ENCODE measurements at regions of chr4 and their contacts with region 1.

Region 1: GRCh38 chr4:185134307-185134869 is 8.7 kb upstream of the SLC25A4 start:
- DNase-seq: peak in 1 of 2 donors; percentile 71
- ATAC-seq: peak; percentile 69 to 75 (median 70)
- H3K4me3 ChIP-seq: no peak overlapping the region
- H3K4me3 Mint-ChIP-seq: no peak overlapping the region
- H3K27ac ChIP-seq: no peak overlapping the region
- H3K27ac Mint-ChIP-seq: no peak overlapping the region
- H3K4me1 ChIP-seq: no peaks in the 10 kb centered on the region
- H3K4me1 Mint-ChIP-seq: peaks cover 0 to 3% of the 10 kb centered on the region in 2 donors
- H3K27me3 ChIP-seq: peaks cover 4% of the 10 kb centered on the region
- H3K27me3 Mint-ChIP-seq: peaks cover 19 to 44% of the 10 kb centered on the region in 2 donors
- CTCF ChIP-seq: peak; percentile 91

Region 2: GRCh38 chr4:184745831-184746795 is 388.3 kb before region 1 on chr4:
- intact Hi-C with region 1: loop called (anchors 10 kb)
- DNase-seq: peak; percentile 26 to 85
- ATAC-seq: peak; percentile 77 to 90 (median 79)
- H3K4me3 ChIP-seq: no peak overlapping the region
- H3K4me3 Mint-ChIP-seq: no peak overlapping the region
- H3K27ac ChIP-seq: no peak overlapping the region
- H3K27ac Mint-ChIP-seq: no peak overlapping the region
- H3K4me1 ChIP-seq: peaks cover 6% of the 10 kb centered on the region
- H3K4me1 Mint-ChIP-seq: peaks cover 16 to 17% of the 10 kb centered on the region in 2 donors
- H3K27me3 ChIP-seq: no peaks in the 10 kb centered on the region
- H3K27me3 Mint-ChIP-seq: peaks cover 4 to 8% of the 10 kb centered on the region in 2 donors
- CTCF ChIP-seq: peak; percentile 66

Measured in natural killer cell (primary cell).